Caco-2 (cell line): ENCODE measurements at regions of chr4 and their contacts with region 1.

Region 1: GRCh38 chr4:6343950-6344408 is 74.3 kb downstream of the WFS1 start:
- DNase-seq: peak; percentile 49 to 62
- H3K4me3 ChIP-seq: no peak overlapping the region
- H3K4me3 Mint-ChIP-seq: no peak overlapping the region
- H3K27ac Mint-ChIP-seq: no peak overlapping the region
- H3K4me1 ChIP-seq: no peaks in the 10 kb centered on the region
- H3K4me1 Mint-ChIP-seq: no peaks in the 10 kb centered on the region
- H3K27me3 ChIP-seq: no peaks in the 10 kb centered on the region; the same call in 1 of the 2 replicates
- H3K27me3 Mint-ChIP-seq: peaks cover 29% of the 10 kb centered on the region
- CTCF ChIP-seq: peak in 1 of 2 experiments; percentile 59

Region 2: DNA sequence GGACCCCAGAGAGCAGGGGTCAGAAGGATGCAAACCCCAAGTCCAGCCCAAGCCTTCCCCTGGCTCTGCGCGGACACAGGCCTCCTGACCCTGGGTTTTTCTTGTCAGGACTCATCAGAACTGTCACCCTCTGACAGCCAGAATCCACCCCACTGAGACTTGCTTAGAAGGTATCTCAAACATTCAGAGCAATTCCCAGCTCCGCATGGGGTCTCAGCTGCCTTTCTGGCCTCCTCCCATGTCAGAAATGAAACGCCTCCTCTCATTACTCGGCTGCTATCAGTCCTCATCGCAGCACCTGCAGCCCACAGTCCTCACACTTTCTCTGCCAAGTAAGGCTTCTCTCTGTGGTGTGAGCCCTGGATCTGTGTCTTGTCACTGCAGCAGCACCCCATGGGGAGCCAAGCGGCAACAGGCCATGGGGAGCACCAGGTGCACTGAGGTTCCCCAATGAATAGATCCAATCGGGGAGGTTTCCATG is 23.4 kb after region 1 on chr4:
- CTCF ChIA-PET with region 1: no interaction called
- POLR2A ChIA-PET with region 1: no interaction called
- intact Hi-C with region 1: no loop called
- DNase-seq: no peak
- H3K4me3 ChIP-seq: no peak overlapping the region
- H3K4me3 Mint-ChIP-seq: no peak overlapping the region
- H3K27ac Mint-ChIP-seq: no peak overlapping the region
- H3K4me1 ChIP-seq: no peaks in the 10 kb centered on the region
- H3K4me1 Mint-ChIP-seq: no peaks in the 10 kb centered on the region
- H3K27me3 ChIP-seq: no peaks in the 10 kb centered on the region; the same call in 1 of the 2 replicates
- H3K27me3 Mint-ChIP-seq: peaks cover 25% of the 10 kb centered on the region
- CTCF ChIP-seq: no peak

Region 3: GRCh38 chr4:6379767-6380745 is 36.1 kb after region 1 on chr4:
- CTCF ChIA-PET with region 1: no interaction called
- POLR2A ChIA-PET with region 1: no interaction called
- intact Hi-C with region 1: loop called (anchors 5 kb)
- DNase-seq: no peak
- H3K4me3 ChIP-seq: no peak overlapping the region
- H3K4me3 Mint-ChIP-seq: no peak overlapping the region
- H3K27ac Mint-ChIP-seq: no peak overlapping the region
- H3K4me1 ChIP-seq: no peaks in the 10 kb centered on the region
- H3K4me1 Mint-ChIP-seq: no peaks in the 10 kb centered on the region
- H3K27me3 ChIP-seq: no peaks in the 10 kb centered on the region
- H3K27me3 Mint-ChIP-seq: peaks cover 17% of the 10 kb centered on the region
- CTCF ChIP-seq: no peak

Region 4: DNA sequence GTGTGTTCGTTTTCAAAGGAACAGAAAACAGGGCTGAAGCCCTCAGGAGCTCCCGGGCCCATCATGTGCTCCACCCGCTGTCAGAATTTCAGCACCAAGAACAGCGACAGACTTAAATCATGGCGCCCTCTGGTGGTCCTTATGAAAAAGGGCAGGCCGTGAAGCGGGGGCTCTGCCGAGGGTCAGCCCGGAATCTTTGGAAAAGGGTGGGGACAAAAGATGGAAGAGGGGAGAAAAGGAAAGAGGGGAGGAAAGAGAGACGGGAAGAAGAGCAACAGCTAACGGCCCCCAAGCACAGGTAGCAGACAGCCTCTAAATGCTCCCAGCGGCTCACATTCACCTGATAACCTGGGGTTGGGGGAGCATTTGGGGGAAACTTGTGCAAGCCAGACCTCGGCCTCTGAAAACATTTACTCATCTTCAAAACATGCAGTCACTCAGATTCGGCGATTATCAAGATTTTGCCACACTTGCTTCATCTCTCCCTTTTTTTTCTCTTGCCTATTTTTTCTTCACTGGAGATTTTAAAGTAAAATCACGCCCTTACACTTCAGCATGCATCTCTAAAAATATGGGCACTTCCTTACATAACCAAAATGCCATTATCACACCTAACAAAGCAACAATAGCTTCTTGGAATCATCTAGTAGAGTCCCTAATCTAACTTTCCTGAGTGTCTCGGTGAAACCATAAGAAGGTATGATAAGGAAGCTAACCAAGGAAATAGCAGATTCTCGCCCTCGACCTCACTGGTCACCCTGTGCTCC is 202.9 kb after region 1 on chr4:
- CTCF ChIA-PET with region 1: no interaction called
- POLR2A ChIA-PET with region 1: no interaction called
- intact Hi-C with region 1: loop called (anchors 2 kb)
- DNase-seq: peak in 1 of 2 experiments; percentile 52
- H3K4me3 ChIP-seq: no peak overlapping the region
- H3K4me3 Mint-ChIP-seq: no peak overlapping the region
- H3K27ac Mint-ChIP-seq: no peak overlapping the region
- H3K4me1 ChIP-seq: no peaks in the 10 kb centered on the region
- H3K4me1 Mint-ChIP-seq: no peaks in the 10 kb centered on the region
- H3K27me3 ChIP-seq: no peaks in the 10 kb centered on the region
- H3K27me3 Mint-ChIP-seq: peaks cover 22% of the 10 kb centered on the region
- CTCF ChIP-seq: peak; percentile 86 to 94